HCT116 (cell line): ENCODE measurements at regions of chr10 and their contacts with region 1.

Region 1: GRCh38 chr10:110918643-110919363 is at the start of gene BBIP1:
- DNase-seq: peak; percentile 100
- ATAC-seq: peak; percentile 91
- H3K4me3 ChIP-seq: peak within 1 kb of the TSS; percentile 80 to 86
- H3K27ac ChIP-seq: peak within 1 kb of the TSS; percentile 83
- H3K4me1 ChIP-seq: peaks cover 4 to 17% of the 10 kb centered on the region in 2 experiments; a peak in 3 of 4 replicates
- H3K27me3 ChIP-seq: no peaks in the 10 kb centered on the region
- CTCF ChIP-seq: no peak
- POLR2A ChIP-seq: no peak
- RAD21 ChIP-seq: no peak
- total RNA-seq, gene BBIP1: 38.9 TPM

Region 2: GRCh38 chr10:110901954-110902819 is 16.6 kb before region 1 on chr10:
- CTCF ChIA-PET with region 1: interaction called, 6 read pairs
- POLR2A ChIA-PET with region 1: interaction called, 35 read pairs
- RAD21 ChIA-PET with region 1: no interaction called
- intact Hi-C with region 1: no loop called
- DNase-seq: peak; percentile 48
- ATAC-seq: no peak; the same call in 1 of the 2 replicates
- H3K4me3 ChIP-seq: no peak overlapping the region
- H3K27ac ChIP-seq: no peak overlapping the region
- H3K4me1 ChIP-seq: peaks cover 0 to 11% of the 10 kb centered on the region in 2 experiments; a peak in 2 of 4 replicates
- H3K27me3 ChIP-seq: no peaks in the 10 kb centered on the region
- CTCF ChIP-seq: no peak
- POLR2A ChIP-seq: no peak
- RAD21 ChIP-seq: no peak